CD4-positive, alpha-beta T cell (primary cell): ENCODE measurements at regions of chr4 and their contacts with region 1.

Region 1: DNA sequence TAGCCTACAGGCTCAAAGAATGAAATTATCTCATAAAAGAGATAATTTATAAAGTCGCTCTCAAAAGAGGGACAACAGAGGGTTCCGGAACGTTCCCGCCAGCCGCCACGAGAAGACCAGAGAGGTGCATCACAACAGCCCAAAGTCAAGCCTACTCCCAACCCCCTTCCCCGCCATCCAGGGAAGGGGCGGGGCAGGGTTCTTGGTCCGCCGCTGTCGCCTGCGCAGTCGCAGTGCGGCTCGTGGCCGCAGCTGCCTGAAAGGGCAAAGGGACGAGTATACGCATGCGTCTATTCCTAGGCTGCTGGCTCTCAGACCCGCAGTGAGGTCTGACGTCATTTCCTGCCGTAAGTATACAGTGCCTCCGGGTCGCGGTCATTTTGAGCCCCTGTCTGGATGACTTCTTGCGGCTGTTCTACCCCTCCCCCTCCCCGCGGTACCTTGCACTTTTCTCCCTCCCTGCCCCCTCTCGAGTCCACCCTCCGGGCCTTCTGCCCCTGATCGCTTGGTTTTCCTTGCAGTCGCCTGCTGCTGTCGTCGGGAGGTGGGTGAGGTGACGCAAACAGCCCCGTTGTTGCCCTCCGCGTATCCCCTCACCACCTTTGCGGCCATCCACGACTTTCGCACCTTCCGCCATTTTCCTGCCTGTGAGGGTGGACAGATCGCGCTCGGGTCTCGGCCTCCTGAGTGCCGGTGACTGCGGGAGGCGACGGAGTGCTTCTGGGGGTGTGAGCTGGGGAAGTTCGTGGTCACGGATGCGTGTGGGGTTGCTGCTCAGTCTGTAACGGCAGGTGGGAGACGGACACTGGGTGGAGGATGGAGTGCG is at the start of gene OCIAD1:
- DNase-seq: peak; percentile 82 to 100 (median 91)
- ATAC-seq: peak; percentile 94
- H3K4me3 ChIP-seq: peak within 1 kb of the TSS; percentile 68
- H3K4me3 Mint-ChIP-seq: peak within 1 kb of the TSS; percentile 100
- H3K27ac ChIP-seq: peak within 1 kb of the TSS; percentile 93
- H3K27ac Mint-ChIP-seq: peak within 1 kb of the TSS; percentile 100
- H3K4me1 ChIP-seq: peaks cover 13% of the 10 kb centered on the region
- H3K4me1 Mint-ChIP-seq: peaks cover 32% of the 10 kb centered on the region
- H3K27me3 ChIP-seq: no peaks in the 10 kb centered on the region
- H3K27me3 Mint-ChIP-seq: peaks cover 10% of the 10 kb centered on the region
- CTCF ChIP-seq: no peak
- total RNA-seq, gene OCIAD1: 85.7 to 89.9 TPM

Region 2: DNA sequence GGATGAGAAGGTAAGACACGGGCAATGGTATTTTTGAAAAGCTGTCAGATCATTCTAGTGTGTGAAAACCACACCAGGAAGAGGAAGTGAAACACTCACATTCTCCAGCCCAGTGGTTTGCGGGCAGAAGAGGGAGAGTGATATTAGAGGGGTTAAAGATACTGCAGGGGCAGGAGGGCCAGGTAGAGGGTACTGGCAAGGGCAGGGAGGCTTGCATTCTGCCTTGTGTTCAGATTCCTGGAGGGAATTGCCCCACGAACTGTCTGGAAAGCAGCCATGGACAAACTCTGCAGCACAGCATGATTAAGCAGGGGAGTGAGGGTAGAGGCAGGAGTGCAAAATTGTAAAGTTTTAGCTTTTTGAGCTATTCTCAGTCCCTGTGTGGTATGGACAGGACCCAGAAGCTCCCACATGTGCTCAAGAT is 783.5 kb before region 1 on chr4:
- CTCF ChIA-PET with region 1: no interaction called
- POLR2A ChIA-PET with region 1: no interaction called
- intact Hi-C with region 1: no loop called
- DNase-seq: peak; percentile 5 to 78 (median 36)
- ATAC-seq: peak; percentile 83
- H3K4me3 ChIP-seq: no peak overlapping the region
- H3K4me3 Mint-ChIP-seq: peak overlapping the region; percentile 73
- H3K27ac ChIP-seq: no peak overlapping the region
- H3K27ac Mint-ChIP-seq: no peak overlapping the region
- H3K4me1 ChIP-seq: peaks cover 41% of the 10 kb centered on the region
- H3K4me1 Mint-ChIP-seq: peaks cover 51% of the 10 kb centered on the region
- H3K27me3 ChIP-seq: no peaks in the 10 kb centered on the region
- H3K27me3 Mint-ChIP-seq: no peaks in the 10 kb centered on the region
- CTCF ChIP-seq: no peak

Region 3: DNA sequence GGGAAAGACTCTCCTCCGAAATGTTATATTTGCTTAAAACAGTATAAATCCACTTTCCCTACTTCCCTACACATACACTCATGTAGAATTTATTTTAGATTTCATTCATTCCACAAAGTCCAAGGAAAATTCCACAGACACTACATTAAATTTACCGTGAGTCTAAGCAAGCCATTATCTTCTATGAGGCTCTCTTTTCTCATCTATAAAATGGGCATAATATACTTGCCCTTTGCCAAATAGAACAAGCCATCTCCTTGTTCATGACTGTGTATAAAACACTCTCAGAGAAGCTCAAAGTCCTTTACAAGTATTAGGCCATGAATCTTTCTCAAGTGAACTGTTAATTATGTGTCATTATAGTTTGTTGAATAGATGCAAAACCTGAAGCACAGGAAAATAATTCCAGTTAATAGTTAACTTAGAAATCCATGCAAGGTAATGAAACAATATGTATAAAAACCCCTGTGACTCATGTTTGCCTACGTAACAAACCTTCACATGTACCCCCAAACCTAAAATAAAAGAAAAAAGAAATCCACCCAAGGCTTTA is 572.0 kb before region 1 on chr4:
- CTCF ChIA-PET with region 1: no interaction called
- POLR2A ChIA-PET with region 1: no interaction called
- intact Hi-C with region 1: no loop called
- DNase-seq: no peak
- ATAC-seq: no peak
- H3K4me3 ChIP-seq: no peak overlapping the region
- H3K4me3 Mint-ChIP-seq: no peak overlapping the region
- H3K27ac ChIP-seq: no peak overlapping the region
- H3K27ac Mint-ChIP-seq: no peak overlapping the region
- H3K4me1 ChIP-seq: no peaks in the 10 kb centered on the region
- H3K4me1 Mint-ChIP-seq: peaks cover 7% of the 10 kb centered on the region
- H3K27me3 ChIP-seq: no peaks in the 10 kb centered on the region
- H3K27me3 Mint-ChIP-seq: peaks cover 6% of the 10 kb centered on the region
- CTCF ChIP-seq: no peak

Region 4: DNA sequence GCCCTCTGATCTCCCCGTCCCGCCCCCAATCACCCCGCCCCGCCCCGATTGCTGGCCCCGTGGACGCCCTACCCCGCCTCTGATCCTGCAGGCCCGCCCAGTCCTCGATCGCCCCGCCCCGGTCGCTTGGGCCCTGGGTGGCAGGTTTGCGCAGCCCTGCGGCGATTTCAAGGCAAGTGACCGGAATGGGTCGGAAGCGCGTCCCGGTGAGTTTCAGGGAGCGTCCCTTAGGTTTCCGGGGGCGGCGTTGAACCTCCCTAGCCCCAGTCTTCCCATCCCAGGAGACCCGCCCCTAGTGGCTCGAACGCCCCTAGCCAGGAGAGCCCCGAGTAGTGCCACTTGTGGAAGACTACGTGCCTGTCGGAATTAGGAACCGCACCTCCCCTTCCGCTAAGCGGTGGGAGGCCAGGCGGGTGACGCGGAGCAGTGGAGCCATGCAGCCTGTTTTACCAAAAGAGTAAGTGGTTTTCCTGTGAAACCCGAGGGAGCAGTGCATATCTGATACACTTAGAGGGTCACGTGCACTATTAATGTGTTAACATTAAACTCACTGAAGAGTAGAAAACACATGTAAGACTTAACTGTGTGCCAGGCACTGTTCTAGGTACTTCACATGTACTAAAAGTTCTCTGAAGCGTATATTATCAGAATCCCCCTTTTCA is 560.9 kb before region 1 on chr4:
- CTCF ChIA-PET with region 1: no interaction called
- POLR2A ChIA-PET with region 1: no interaction called
- intact Hi-C with region 1: loop called in 1 of 2 experiments (anchors 5 kb)
- DNase-seq: peak; percentile 73 to 91 (median 80)
- ATAC-seq: peak; percentile 87
- H3K4me3 ChIP-seq: peak overlapping the region; percentile 87
- H3K4me3 Mint-ChIP-seq: peak overlapping the region; percentile 98
- H3K27ac ChIP-seq: peak overlapping the region in 1 of 2 donors; percentile 55
- H3K27ac Mint-ChIP-seq: peak overlapping the region; percentile 79
- H3K4me1 ChIP-seq: peaks cover 19% of the 10 kb centered on the region
- H3K4me1 Mint-ChIP-seq: peaks cover 29% of the 10 kb centered on the region
- H3K27me3 ChIP-seq: no peaks in the 10 kb centered on the region
- H3K27me3 Mint-ChIP-seq: no peaks in the 10 kb centered on the region
- CTCF ChIP-seq: peak; percentile 46

Region 5: DNA sequence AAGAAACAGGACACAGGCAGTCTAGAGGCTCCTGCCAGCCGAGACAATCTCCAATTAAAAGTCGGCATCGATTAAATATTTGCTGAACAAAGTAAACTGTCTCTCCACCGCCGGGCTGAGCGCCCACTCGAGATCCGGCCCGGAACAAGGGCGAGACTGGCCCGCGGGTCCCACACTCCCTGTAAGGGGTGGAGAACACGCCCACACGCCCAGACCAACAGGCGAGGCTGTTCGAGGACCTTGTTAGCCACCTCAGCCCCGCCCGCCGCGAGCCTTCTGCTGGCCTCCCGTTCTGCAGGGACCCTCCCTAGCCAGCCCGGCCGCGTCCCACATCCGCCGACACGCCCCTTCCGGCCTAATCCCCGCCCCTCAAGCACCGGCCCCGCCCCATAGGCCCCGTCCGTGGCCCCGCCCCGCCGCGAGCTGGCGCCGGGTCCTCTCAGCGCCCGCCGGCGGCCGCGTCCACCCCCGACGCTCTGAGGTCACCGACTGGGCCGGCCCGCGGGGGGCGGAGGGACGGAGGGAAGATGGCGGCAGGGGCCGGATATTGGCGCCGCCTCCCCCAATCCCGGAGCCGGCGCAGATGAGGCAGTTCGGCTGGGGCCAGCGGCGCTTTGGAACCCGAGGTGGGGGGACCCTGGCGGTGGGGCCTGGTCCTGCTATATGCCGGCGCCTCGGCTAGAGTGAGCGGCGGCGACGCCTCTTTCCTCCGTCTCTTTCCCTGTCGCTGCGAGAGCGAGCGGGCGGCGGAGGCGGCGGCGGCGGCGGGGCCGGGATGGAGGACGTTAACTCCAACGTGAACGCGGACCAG is 489.7 kb before region 1 on chr4 and contains the start of gene SLAIN2:
- CTCF ChIA-PET with region 1: no interaction called
- POLR2A ChIA-PET with region 1: no interaction called
- intact Hi-C with region 1: loop called in 1 of 2 experiments (anchors 2 kb)
- DNase-seq: peak; percentile 92 to 100 (median 98)
- ATAC-seq: peak; percentile 81
- H3K4me3 ChIP-seq: peak within 1 kb of the TSS; percentile 82
- H3K4me3 Mint-ChIP-seq: peak within 1 kb of the TSS; percentile 100
- H3K27ac ChIP-seq: peak within 1 kb of the TSS; percentile 91 to 95
- H3K27ac Mint-ChIP-seq: peak within 1 kb of the TSS; percentile 98
- H3K4me1 ChIP-seq: peaks cover 18% of the 10 kb centered on the region
- H3K4me1 Mint-ChIP-seq: peaks cover 54% of the 10 kb centered on the region
- H3K27me3 ChIP-seq: no peaks in the 10 kb centered on the region
- H3K27me3 Mint-ChIP-seq: no peaks in the 10 kb centered on the region
- CTCF ChIP-seq: peak; percentile 36
- total RNA-seq, gene SLAIN2: 46.3 to 47.0 TPM

Region 6: GRCh38 chr4:48578132-48578968 is 252.6 kb before region 1 on chr4:
- CTCF ChIA-PET with region 1: no interaction called
- POLR2A ChIA-PET with region 1: no interaction called
- intact Hi-C with region 1: loop called in 1 of 2 experiments (anchors 5 kb)
- DNase-seq: peak in 13 of 14 experiments; percentile 4 to 79 (median 34)
- ATAC-seq: peak; percentile 97
- H3K4me3 ChIP-seq: no peak overlapping the region
- H3K4me3 Mint-ChIP-seq: no peak overlapping the region
- H3K27ac ChIP-seq: no peak overlapping the region
- H3K27ac Mint-ChIP-seq: peak overlapping the region; percentile 1
- H3K4me1 ChIP-seq: no peaks in the 10 kb centered on the region
- H3K4me1 Mint-ChIP-seq: no peaks in the 10 kb centered on the region
- H3K27me3 ChIP-seq: no peaks in the 10 kb centered on the region
- H3K27me3 Mint-ChIP-seq: no peaks in the 10 kb centered on the region
- CTCF ChIP-seq: peak; percentile 95

Region 7: DNA sequence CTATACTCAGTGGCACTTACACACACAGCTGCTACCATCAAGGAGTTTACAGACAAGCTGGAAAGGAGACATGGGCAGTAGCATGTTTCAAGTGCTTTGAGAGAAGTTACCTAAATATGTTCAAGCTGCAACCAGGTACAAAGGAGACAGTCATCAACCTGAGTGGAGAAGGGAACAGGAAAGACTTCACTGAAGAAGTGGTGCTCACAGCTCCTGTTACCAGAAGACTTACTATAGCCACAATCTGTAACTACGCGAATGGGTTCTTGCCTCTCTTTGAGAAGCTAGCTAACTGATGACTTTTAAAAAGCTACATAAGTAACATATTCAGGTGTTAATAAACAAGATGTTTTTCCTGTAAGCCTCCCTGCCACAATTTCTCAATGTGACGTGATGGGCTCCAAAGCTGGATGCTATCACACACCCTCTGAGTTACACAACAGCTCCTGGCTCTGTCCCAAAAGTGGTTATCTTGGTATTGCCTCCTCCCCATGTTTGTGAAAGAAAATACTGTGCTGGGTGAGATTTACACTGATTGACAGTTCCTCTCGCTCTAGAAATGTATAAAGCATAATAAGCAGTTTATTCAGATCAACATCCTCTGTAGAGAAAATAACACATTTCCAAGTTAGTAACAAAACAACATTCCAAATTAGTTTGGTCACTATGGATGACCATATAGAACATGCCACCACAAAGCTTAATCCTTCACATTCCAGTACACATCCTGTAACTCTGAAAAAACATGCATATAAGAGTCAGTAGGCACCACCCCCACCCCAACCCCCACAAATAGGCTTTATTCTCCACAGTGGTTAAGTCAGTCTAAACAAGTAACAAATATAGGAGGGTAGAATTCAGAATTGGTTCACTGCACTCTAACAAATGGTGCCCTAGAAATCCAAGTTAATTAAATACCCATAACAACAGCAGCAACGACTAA is 132.6 kb before region 1 on chr4:
- CTCF ChIA-PET with region 1: no interaction called
- POLR2A ChIA-PET with region 1: no interaction called
- intact Hi-C with region 1: loop called in 1 of 2 experiments (anchors 10 kb)
- DNase-seq: peak in 2 of 14 experiments; percentile 11 to 16
- ATAC-seq: peak; percentile 34
- H3K4me3 ChIP-seq: no peak overlapping the region
- H3K4me3 Mint-ChIP-seq: peak overlapping the region; percentile 5
- H3K27ac ChIP-seq: no peak overlapping the region
- H3K27ac Mint-ChIP-seq: peak overlapping the region; percentile 19
- H3K4me1 ChIP-seq: peaks cover 3% of the 10 kb centered on the region
- H3K4me1 Mint-ChIP-seq: peaks cover 77% of the 10 kb centered on the region
- H3K27me3 ChIP-seq: no peaks in the 10 kb centered on the region
- H3K27me3 Mint-ChIP-seq: no peaks in the 10 kb centered on the region
- CTCF ChIP-seq: no peak